OCI-LY7 (cell line): ENCODE measurements at regions of chr17 and their contacts with region 1.

Region 1: DNA sequence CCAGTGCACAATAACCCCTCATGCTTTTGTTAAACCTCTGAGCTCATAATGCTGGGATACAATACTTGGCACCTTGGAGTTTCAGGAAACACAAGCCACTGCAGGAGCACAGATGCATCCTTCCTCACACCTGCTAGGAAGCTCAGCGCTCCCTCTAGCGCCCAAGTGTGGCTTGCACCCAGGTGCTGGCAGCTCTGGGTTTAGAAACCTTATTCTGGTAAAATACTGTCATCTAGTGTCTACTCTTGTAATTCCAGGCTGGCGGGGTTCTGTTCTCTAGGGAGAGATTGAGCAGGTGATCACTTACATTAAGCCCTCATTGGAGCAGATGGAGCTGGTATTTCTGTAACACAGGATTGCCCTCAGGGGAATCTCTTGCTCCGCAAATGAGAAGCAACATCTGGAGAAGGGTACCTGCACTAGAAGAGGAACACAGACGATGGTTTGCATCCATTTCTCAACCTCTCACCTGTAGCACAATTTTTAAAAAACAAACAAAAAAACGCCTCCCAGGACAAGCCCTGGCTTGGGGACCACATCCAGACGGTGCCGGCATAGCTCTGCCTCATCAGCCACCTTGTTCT is 1.5 kb downstream of the CCL1 start:
- DNase-seq: peak; percentile 95
- H3K4me3 ChIP-seq: no peak overlapping the region
- H3K27ac ChIP-seq: peak overlapping the region; percentile 98
- H3K4me1 ChIP-seq: peaks cover 62% of the 10 kb centered on the region
- CTCF ChIP-seq: peak; percentile 100

Region 2: DNA sequence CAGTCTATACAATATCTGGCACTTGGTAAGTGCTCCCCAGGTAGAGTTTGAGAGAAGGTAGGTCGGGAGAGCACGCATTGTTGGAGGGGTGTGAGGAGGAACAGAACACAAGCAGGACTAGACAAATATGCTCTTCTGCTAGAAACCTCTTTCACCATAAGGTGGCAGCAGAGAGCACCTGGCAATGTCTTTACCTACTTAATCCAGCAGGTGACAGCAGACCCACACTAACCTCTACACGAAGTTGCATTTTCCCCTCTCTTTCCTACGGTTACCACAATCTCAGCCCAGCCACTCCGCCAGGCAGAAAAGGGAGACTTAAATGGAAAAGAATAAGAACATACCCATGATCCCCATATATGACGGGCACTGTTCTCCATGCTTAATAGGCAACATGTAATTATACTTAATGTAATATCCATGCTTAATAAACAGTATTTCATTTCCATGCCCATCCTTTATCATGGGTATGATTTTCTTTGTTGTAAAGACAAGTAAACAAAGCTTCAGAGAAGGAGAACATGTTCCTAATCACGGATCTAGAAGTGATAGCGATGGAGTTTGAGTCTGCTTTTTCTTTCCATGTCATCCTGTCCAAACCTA is 161.5 kb before region 1 on chr17:
- CTCF ChIA-PET with region 1: interaction called, 32 read pairs
- POLR2A ChIA-PET with region 1: interaction called, 3 read pairs
- intact Hi-C with region 1: loop called (anchors 1 kb)
- DNase-seq: peak; percentile 86
- H3K4me3 ChIP-seq: no peak overlapping the region
- H3K27ac ChIP-seq: no peak overlapping the region
- H3K4me1 ChIP-seq: no peaks in the 10 kb centered on the region
- CTCF ChIP-seq: peak; percentile 100

Region 3: GRCh38 chr17:34254651-34255380 is 106.8 kb before region 1 on chr17 and contains the start of gene CCL2:
- CTCF ChIA-PET with region 1: no interaction called
- POLR2A ChIA-PET with region 1: no interaction called
- intact Hi-C with region 1: loop called (anchors 5 kb)
- DNase-seq: no peak
- H3K4me3 ChIP-seq: no peak within 1 kb of the TSS
- H3K27ac ChIP-seq: no peak within 1 kb of the TSS
- H3K4me1 ChIP-seq: no peaks in the 10 kb centered on the region
- CTCF ChIP-seq: no peak
- total RNA-seq, gene CCL2: not detected in 2 replicates

Region 4: DNA sequence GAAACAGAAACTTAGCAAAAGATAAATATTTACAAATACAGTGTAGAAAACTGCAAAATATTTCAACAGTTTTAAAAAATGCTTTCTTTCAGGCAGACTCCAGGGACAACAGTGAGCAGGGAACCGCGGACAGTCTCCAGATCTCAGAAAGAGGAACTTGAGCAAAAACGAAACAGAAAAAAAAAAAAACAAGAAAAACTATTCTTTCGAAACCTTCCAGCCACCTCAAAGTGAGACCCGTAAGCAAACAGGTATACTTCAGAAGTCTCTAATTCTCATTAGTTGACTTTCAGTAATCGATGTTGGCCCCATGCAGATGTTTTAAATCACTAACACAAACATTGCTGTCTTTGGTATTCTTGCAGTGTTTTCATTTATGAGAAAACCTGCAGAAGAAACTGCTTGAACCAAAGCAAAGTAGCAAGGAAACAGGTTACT is 17.1 kb after region 1 on chr17:
- CTCF ChIA-PET with region 1: interaction called, 6 read pairs
- POLR2A ChIA-PET with region 1: interaction called, 9 read pairs
- intact Hi-C with region 1: loop called (anchors 2 kb)
- DNase-seq: peak; percentile 85
- H3K4me3 ChIP-seq: peak overlapping the region; percentile 54
- H3K27ac ChIP-seq: peak overlapping the region; percentile 87
- H3K4me1 ChIP-seq: peaks cover 68% of the 10 kb centered on the region
- CTCF ChIP-seq: peak; percentile 62

Region 5: GRCh38 chr17:34519282-34519681 is 157.7 kb after region 1 on chr17:
- CTCF ChIA-PET with region 1: no interaction called
- POLR2A ChIA-PET with region 1: no interaction called
- intact Hi-C with region 1: loop called (anchors 10 kb)
- DNase-seq: peak; percentile 43
- H3K4me3 ChIP-seq: no peak overlapping the region
- H3K27ac ChIP-seq: no peak overlapping the region
- H3K4me1 ChIP-seq: no peaks in the 10 kb centered on the region
- CTCF ChIP-seq: peak; percentile 83